ENCODE measurements at regions of chr21 and their contacts with region 1.

Region 1: DNA sequence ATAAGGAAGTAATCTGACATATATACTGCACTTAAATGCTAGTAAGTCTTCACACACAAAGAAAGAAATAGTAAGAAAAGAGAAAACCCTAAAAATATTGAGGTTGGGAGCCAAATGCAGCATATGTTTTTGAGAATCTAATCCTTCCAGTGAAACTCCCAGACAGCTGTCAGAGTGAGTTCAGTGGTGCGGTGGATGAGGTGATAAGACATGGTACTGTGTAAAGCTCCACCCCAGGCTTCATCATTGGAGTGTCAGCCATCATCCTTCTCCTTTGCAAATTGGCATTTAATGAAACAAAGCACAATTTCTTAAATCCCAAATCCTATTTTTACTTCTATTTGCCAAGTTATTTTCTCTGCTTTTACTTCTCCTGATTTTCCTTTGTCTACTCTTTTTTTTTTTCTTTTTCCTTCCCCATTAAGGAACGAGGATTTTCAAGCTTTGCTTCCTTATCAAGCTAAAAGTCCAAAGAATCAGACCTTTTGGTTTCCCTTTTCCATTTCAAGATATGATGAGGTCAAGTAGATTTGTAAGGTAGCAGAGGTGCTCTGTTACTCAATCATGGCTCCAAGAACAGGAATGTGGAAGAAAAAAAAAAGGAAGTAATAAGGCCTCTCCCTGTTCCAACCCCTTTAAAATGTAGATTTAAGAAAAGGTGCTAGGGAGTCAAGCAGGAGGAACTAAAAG is 343.3 kb downstream of the SETD4 start:
- DNase-seq: no peak
- H3K4me3 ChIP-seq: no peak overlapping the region
- H3K27ac ChIP-seq: no peak overlapping the region
- H3K4me1 ChIP-seq: peaks cover 11% of the 10 kb centered on the region
- H3K27me3 ChIP-seq: no peaks in the 10 kb centered on the region
- CTCF ChIP-seq: no peak
- EP300 ChIP-seq: no peak
- POLR2A ChIP-seq: no peak

Region 2: DNA sequence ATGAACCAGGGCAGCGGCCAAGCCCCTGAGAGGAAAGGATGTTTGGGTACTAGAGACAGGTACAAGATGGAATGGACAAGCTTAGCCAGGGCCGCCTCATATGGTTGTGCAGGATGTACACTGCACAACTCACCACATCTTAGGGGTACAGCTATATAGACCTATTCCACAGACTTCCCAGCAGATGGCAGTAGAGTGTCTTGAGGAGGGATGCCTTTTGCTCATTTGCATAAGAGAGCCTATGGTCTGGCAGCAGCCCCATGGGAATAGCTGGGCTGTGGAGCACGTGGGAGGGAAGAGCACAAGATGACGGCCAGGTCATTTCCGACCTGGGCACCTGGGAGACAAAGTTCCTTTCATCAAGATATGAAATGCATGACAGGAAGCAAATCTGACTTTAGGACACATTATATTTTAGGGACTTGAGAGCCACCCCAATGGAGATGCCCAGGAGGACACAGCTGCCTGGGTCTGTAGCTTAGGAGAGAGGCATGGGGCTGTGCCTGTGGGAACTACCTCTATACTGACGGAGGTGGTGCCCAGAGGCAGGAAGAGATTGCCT is 1983.7 kb after region 1 on chr21:
- intact Hi-C with region 1: loop called in 1 of 4 experiments (anchors 5 kb)
- DNase-seq: no peak
- H3K4me3 ChIP-seq: no peak overlapping the region
- H3K27ac ChIP-seq: no peak overlapping the region
- H3K4me1 ChIP-seq: no peaks in the 10 kb centered on the region
- H3K27me3 ChIP-seq: no peaks in the 10 kb centered on the region
- CTCF ChIP-seq: no peak
- EP300 ChIP-seq: no peak
- POLR2A ChIP-seq: no peak

Measured in ovary (tissue), 10 donors.